Activated T-helper 1 cell treated with anti-CD3 and anti-CD28 coated beads, Interleukin-12 subunit alpha, Interleukin-12 subunit beta, Interleukin-2, Interleukin-4 antibody, amounts not matched to agents 30 ng/mL and 10 ng/mL and 1 ng/mL, durations not matched to agents 14 hours and 24 hours and 36 hours (primary cell): ENCODE measurements at regions of chr19 and their contacts with region 1.

Region 1: DNA sequence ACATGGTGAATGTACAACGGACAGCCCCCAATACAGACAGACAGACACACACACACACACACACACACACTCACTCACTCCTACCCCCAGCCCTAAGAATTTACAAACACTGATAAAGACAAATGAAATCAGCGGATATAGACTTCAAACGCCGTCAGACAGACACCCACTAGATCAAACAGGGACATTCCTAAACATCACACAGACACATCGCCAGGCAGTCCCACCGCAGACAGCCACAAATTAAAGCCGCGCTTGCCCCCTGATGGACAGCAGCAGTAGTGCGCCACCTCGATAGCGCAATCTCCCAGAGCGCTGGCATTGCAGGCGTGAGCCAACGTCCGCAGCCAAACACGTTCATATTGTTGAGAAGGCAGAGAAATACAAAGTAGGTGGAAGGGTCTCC is 24.7 kb upstream of the ADGRE1 start:
- DNase-seq: peak; percentile 86
- H3K4me3 Mint-ChIP-seq: peak overlapping the region; percentile 79
- H3K27ac Mint-ChIP-seq: peak overlapping the region; percentile 74
- H3K4me1 Mint-ChIP-seq: peaks cover 13% of the 10 kb centered on the region
- H3K27me3 Mint-ChIP-seq: no peaks in the 10 kb centered on the region

Region 2: GRCh38 chr19:6372594-6373095 is 490.0 kb before region 1 on chr19 and contains the start of gene ALKBH7:
- intact Hi-C with region 1: loop called (anchors 1 kb)
- DNase-seq: peak; percentile 95
- H3K4me3 Mint-ChIP-seq: peak within 1 kb of the TSS; percentile 81
- H3K27ac Mint-ChIP-seq: peak within 1 kb of the TSS; percentile 81
- H3K4me1 Mint-ChIP-seq: peaks cover 11% of the 10 kb centered on the region
- H3K27me3 Mint-ChIP-seq: no peaks in the 10 kb centered on the region
- total RNA-seq, gene ALKBH7: 24.8 and 27.1 TPM in 2 replicates

Region 3: GRCh38 chr19:6460101-6460853 is 402.4 kb before region 1 on chr19:
- intact Hi-C with region 1: loop called (anchors 1 kb)
- DNase-seq: peak; percentile 95
- H3K4me3 Mint-ChIP-seq: peak overlapping the region; percentile 89
- H3K27ac Mint-ChIP-seq: peak overlapping the region; percentile 84
- H3K4me1 Mint-ChIP-seq: peaks cover 21% of the 10 kb centered on the region
- H3K27me3 Mint-ChIP-seq: peaks cover 4% of the 10 kb centered on the region

Region 4: DNA sequence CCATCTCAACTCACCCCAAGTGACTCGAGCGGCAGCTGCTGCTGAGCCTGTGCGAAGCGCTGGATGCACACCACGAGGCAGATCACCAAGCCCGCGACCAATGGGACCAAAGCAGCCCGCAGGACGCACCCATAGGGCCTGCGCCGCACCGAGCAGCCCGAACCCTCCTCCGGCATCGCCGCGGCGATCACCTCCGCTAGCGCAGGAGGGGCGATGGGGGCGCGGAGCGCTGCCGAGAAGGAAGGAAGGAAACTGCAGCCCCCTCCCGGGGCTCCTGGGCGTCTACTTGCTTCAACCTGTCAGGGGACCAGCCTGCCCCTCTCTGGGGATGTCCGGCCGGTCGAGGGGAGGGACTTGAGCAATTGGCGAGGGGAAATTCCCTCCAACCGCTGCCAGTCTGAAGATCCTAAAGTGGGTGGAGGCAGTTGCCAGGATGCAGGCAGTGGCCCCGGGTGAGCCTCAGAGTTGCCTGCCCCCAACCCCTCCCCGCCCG is 271.8 kb before region 1 on chr19 and contains the start of gene CD70:
- intact Hi-C with region 1: loop called (anchors 2 kb)
- DNase-seq: peak; percentile 70
- H3K4me3 Mint-ChIP-seq: peak within 1 kb of the TSS; percentile 95
- H3K27ac Mint-ChIP-seq: peak within 1 kb of the TSS; percentile 87
- H3K4me1 Mint-ChIP-seq: peaks cover 66% of the 10 kb centered on the region
- H3K27me3 Mint-ChIP-seq: peaks cover 33% of the 10 kb centered on the region
- total RNA-seq, gene CD70: 55.4 and 61.6 TPM in 2 replicates

Region 5: GRCh38 chr19:6737284-6738046 is 125.2 kb before region 1 on chr19 and contains the start of gene GPR108:
- intact Hi-C with region 1: loop called (anchors 1 kb)
- DNase-seq: peak; percentile 100
- H3K4me3 Mint-ChIP-seq: peak within 1 kb of the TSS; percentile 96
- H3K27ac Mint-ChIP-seq: peak within 1 kb of the TSS; percentile 99
- H3K4me1 Mint-ChIP-seq: peaks cover 42% of the 10 kb centered on the region
- H3K27me3 Mint-ChIP-seq: no peaks in the 10 kb centered on the region
- total RNA-seq, gene GPR108: 106 and 108 TPM in 2 replicates

Region 6: GRCh38 chr19:6801485-6802086 is 61.1 kb before region 1 on chr19:
- intact Hi-C with region 1: loop called (anchors 1 kb)
- DNase-seq: peak; percentile 72
- H3K4me3 Mint-ChIP-seq: peak overlapping the region; percentile 92
- H3K27ac Mint-ChIP-seq: peak overlapping the region; percentile 99
- H3K4me1 Mint-ChIP-seq: peaks cover 61% of the 10 kb centered on the region
- H3K27me3 Mint-ChIP-seq: no peaks in the 10 kb centered on the region

Region 7: GRCh38 chr19:6903452-6903851 is 40.8 kb after region 1 on chr19:
- intact Hi-C with region 1: no loop called
- DNase-seq: no peak
- H3K4me3 Mint-ChIP-seq: no peak overlapping the region
- H3K27ac Mint-ChIP-seq: no peak overlapping the region
- H3K4me1 Mint-ChIP-seq: no peaks in the 10 kb centered on the region
- H3K27me3 Mint-ChIP-seq: peaks cover 2% of the 10 kb centered on the region

Region 8: DNA sequence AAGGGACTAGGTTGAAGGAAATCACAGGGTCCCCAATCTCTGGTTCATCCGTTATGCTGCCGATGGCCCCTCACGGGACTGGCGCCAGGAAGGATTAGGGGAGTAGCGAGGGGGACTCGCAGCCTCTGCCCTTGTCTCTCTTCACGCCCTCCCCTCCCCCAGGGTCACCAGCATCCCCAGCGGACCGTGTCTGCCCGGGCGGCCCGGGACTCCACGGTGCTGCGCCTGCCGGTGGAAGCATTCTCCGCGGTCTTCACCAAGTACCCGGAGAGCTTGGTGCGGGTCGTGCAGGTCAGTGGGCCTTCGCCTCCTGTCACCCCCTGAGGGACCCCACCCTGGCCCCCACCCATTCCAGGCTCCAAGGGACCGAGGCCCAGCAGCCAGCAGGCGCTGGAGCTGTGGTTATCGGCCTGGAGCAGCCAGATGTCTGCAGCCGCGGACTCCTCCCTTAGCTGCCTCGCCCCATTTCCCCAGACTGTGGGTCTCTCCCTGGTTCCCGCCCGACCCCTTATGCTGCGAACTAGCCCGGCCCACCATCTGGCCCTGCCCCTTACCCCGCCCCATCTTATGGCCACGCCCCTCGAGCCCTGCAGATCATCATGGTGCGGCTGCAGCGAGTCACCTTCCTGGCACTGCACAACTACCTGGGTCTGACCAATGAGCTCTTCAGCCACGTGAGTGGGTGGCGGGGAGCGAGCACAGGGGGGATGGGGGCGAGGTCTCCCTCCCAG is 678.2 kb after region 1 on chr19:
- intact Hi-C with region 1: no loop called
- DNase-seq: no peak
- H3K4me3 Mint-ChIP-seq: no peak overlapping the region
- H3K27ac Mint-ChIP-seq: no peak overlapping the region
- H3K4me1 Mint-ChIP-seq: peaks cover 27% of the 10 kb centered on the region
- H3K27me3 Mint-ChIP-seq: no peaks in the 10 kb centered on the region